B cell (primary cell): ENCODE measurements at regions of chr6 and their contacts with region 1.

Region 1: GRCh38 chr6:83192871-83193746 is at the starts of genes PGM3 and RWDD2A:
- DNase-seq: peak; percentile 94
- ATAC-seq: peak; percentile 97
- H3K4me3 ChIP-seq: peak within 1 kb of the TSS; percentile 58 to 93 (median 85)
- H3K4me3 Mint-ChIP-seq: peak within 1 kb of the TSS; percentile 100
- H3K27ac ChIP-seq: peak within 1 kb of the TSS; percentile 58 to 94
- H3K27ac Mint-ChIP-seq: peak within 1 kb of the TSS; percentile 97
- H3K4me1 ChIP-seq: peaks cover 23% of the 10 kb centered on the region in 2 donors
- H3K4me1 Mint-ChIP-seq: peaks cover 39% of the 10 kb centered on the region
- H3K27me3 ChIP-seq: no peaks in the 10 kb centered on the region
- H3K27me3 Mint-ChIP-seq: no peaks in the 10 kb centered on the region
- CTCF ChIP-seq: no peak
- total RNA-seq, gene PGM3: 24.5 and 35.3 TPM in 2 replicates
- total RNA-seq, gene RWDD2A: 2.7 and 2.9 TPM in 2 replicates

Region 2: GRCh38 chr6:82247634-82248232 is 945.4 kb before region 1 on chr6 and contains the start of gene IBTK:
- CTCF ChIA-PET with region 1: no interaction called
- POLR2A ChIA-PET with region 1: no interaction called
- intact Hi-C with region 1: loop called (anchors 1 kb)
- DNase-seq: peak; percentile 92
- ATAC-seq: peak; percentile 88
- H3K4me3 ChIP-seq: peak within 1 kb of the TSS; percentile 59 to 96 (median 88)
- H3K4me3 Mint-ChIP-seq: peak within 1 kb of the TSS; percentile 99
- H3K27ac ChIP-seq: peak within 1 kb of the TSS; percentile 82 to 83
- H3K27ac Mint-ChIP-seq: peak within 1 kb of the TSS; percentile 95
- H3K4me1 ChIP-seq: peaks cover 15 to 20% of the 10 kb centered on the region in 2 donors
- H3K4me1 Mint-ChIP-seq: peaks cover 34% of the 10 kb centered on the region
- H3K27me3 ChIP-seq: no peaks in the 10 kb centered on the region
- H3K27me3 Mint-ChIP-seq: peaks cover under 1% of the 10 kb centered on the region
- CTCF ChIP-seq: no peak
- total RNA-seq, gene IBTK: 27.7 and 28.3 TPM in 2 replicates

Region 3: DNA sequence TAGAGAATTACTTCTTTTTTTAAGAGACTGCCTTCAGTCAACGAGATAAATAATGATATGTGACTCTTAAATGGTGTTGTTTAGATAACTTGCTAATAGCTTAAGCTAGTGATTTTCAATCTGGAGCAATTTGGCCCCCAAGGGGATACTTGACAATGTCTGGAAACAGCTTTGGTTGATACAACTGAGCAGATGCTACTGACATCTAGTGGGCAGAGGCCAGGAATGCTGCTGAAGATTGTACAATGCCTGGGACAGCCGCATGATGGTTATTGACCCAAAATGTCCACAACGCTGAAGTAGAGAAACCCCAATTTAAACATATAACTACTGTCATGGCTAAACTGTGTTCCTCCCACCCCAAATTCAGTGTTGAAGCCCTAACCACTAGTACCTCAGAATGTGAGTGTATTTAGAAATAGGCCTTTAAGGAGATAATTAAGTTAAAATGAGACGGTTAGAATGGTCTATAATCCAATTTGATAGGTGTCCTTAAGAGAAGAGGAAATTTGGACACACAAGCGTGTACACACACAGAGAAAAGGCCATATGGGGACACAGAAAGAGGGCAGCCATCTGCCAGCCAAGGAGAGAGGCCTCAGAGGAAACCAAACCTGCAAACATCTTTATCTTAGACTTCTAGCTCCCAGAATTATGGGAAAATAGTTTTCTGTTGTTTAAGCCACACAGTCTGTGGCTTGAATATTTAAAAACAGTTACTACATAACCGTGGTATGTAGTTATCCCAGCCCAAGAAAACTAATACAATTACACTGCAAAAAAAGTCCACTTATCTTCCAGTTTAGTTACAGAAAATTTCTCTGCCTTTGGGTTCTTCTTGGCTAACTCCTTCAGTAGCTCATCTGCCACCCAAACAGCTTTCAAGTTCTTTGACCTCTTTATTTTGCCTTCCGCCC is 22.3 kb after region 1 on chr6:
- CTCF ChIA-PET with region 1: interaction called, 6 read pairs
- POLR2A ChIA-PET with region 1: no interaction called
- intact Hi-C with region 1: loop called (anchors 1 kb)
- DNase-seq: peak; percentile 72
- ATAC-seq: peak; percentile 98
- H3K4me3 ChIP-seq: no peak overlapping the region
- H3K4me3 Mint-ChIP-seq: no peak overlapping the region
- H3K27ac ChIP-seq: no peak overlapping the region
- H3K27ac Mint-ChIP-seq: no peak overlapping the region
- H3K4me1 ChIP-seq: no peaks in the 10 kb centered on the region
- H3K4me1 Mint-ChIP-seq: no peaks in the 10 kb centered on the region
- H3K27me3 ChIP-seq: peaks cover 0 to 15% (median 0%) of the 10 kb centered on the region in 4 experiments
- H3K27me3 Mint-ChIP-seq: peaks cover 17% of the 10 kb centered on the region
- CTCF ChIP-seq: peak; percentile 81

Region 4: DNA sequence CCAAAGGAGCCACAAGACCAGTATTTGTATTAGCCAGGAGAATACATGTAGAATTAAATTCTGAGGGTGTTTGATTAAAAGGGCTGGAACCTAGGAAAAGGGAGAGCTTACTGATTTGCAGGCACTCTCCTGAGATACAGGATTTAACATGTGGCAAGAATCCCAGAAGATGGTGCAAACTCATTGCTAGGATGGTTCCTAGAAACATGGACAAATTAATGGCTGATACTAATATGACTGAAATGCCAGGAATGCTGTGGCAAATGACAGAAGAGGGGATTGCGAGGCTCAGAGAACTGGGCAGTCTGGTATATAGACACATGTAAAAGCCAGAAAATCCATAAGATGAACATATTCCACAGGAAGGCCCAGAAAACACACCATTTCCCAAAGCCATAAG is 118.1 kb after region 1 on chr6:
- CTCF ChIA-PET with region 1: no interaction called
- POLR2A ChIA-PET with region 1: no interaction called
- intact Hi-C with region 1: no loop called
- DNase-seq: no peak
- ATAC-seq: no peak
- H3K4me3 ChIP-seq: no peak overlapping the region
- H3K4me3 Mint-ChIP-seq: no peak overlapping the region
- H3K27ac ChIP-seq: no peak overlapping the region
- H3K27ac Mint-ChIP-seq: no peak overlapping the region
- H3K4me1 ChIP-seq: no peaks in the 10 kb centered on the region
- H3K4me1 Mint-ChIP-seq: no peaks in the 10 kb centered on the region
- H3K27me3 ChIP-seq: no peaks in the 10 kb centered on the region
- H3K27me3 Mint-ChIP-seq: peaks cover 3% of the 10 kb centered on the region
- CTCF ChIP-seq: no peak

Region 5: GRCh38 chr6:83859410-83860358 is 666.6 kb after region 1 on chr6 and contains the start of gene CYB5R4:
- CTCF ChIA-PET with region 1: no interaction called
- POLR2A ChIA-PET with region 1: no interaction called
- intact Hi-C with region 1: loop called (anchors 10 kb)
- DNase-seq: peak; percentile 95
- ATAC-seq: peak; percentile 97
- H3K4me3 ChIP-seq: peak within 1 kb of the TSS; percentile 85 to 98 (median 94)
- H3K4me3 Mint-ChIP-seq: peak within 1 kb of the TSS; percentile 99
- H3K27ac ChIP-seq: peak within 1 kb of the TSS; percentile 83 to 87
- H3K27ac Mint-ChIP-seq: peak within 1 kb of the TSS; percentile 95
- H3K4me1 ChIP-seq: peaks cover 25% of the 10 kb centered on the region in 2 donors
- H3K4me1 Mint-ChIP-seq: peaks cover 46% of the 10 kb centered on the region
- H3K27me3 ChIP-seq: peaks cover 0 to 10% (median 7%) of the 10 kb centered on the region in 4 experiments
- H3K27me3 Mint-ChIP-seq: peaks cover 16% of the 10 kb centered on the region
- CTCF ChIP-seq: peak; percentile 47
- total RNA-seq, gene CYB5R4: 39.6 and 43.7 TPM in 2 replicates